ENCODE measurements at regions of chr2 and their contacts with region 1.

Region 1: DNA sequence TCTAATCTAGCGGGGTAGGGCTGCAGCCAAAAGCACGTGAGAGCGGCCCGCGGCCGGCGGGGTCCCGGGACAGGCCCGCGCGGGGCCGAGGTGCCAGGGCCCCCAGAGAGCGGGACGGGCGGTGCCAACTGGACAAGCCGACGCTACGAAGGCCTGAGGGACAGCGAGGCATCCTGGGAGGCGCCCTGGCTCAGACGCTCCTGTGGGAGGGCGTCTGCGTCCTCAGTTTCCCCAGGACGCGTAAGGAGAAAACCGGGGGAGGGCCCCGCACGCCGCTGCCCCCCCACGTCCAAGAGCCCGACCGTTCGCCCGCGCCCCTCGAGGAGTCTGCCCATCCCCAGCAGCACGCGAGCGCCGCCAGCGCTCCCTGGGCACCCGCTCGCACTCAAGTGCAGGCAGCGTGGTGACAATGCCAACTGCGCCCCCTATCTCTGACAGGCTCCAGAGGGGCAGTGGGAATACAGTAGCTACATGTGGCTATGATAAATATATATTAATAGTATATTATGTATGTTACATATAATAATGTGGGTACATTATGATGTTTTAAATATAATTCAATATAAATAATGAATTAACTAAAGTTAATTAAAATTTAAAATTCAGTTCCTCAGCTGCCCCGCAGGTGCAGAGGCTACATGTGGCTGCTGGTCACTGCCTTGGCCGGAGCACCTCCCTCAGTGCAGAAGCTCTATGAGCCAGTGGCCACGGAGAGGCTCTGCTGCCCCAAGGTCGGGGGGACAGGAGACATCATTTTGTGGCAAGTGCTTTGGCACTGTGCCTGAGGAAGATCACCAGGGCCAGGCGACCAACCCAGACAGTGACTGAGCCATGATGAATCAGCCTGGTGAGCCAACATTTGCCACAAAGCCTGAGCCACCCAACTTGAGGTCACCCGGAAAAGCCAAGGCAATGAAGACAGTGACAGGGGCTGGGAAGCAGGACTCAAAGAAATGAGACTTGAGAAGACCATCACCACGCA is 5.5 kb upstream of the SFT2D3 start:
- DNase-seq: peak; percentile 75 to 80
- ATAC-seq: peak; percentile 76 to 93 (median 90)
- H3K4me3 ChIP-seq: peak overlapping the region; percentile 23 to 56 (median 49)
- H3K27ac ChIP-seq: peak overlapping the region in 6 of 10 donors; percentile 24 to 55 (median 32)
- H3K4me1 ChIP-seq: peaks cover 2 to 23% (median 12%) of the 10 kb centered on the region in 9 donors
- H3K27me3 ChIP-seq: peaks cover 0 to 5% (median 0%) of the 10 kb centered on the region in 7 donors
- CTCF ChIP-seq: peak; percentile 43 to 88 (median 72)

Region 2: DNA sequence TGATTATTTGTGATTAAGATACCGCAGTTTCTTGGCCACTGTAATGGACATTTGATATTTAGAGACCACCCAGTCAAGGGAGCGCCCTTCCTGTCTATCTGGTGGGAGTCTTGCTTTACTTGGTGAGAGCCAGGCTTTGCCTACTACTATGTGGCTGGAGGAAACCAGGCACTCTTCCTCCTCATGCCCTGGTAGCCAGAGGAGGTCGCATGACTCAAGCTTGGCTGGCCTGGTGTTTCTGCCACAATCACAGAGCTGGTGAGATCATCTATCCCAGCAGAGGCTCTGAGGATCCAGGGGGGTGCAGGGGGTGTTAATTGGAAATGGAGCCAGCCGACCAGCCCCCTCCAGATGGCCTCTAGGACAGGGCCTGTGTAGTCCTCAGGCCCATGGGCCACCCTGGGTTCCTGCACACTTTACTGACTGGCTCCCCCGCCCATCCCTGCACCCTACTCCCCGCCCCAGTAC is 542.1 kb before region 1 on chr2:
- intact Hi-C with region 1: no loop called
- DNase-seq: no peak
- ATAC-seq: peak in 4 of 8 donors; percentile 15 to 71 (median 50)
- H3K4me3 ChIP-seq: no peak overlapping the region
- H3K27ac ChIP-seq: peak overlapping the region in 1 of 10 donors; percentile 57
- H3K4me1 ChIP-seq: peaks cover 0 to 20% (median 0%) of the 10 kb centered on the region in 9 donors
- H3K27me3 ChIP-seq: peaks cover 0 to 10% (median 0%) of the 10 kb centered on the region in 7 donors
- CTCF ChIP-seq: no peak

Region 3: GRCh38 chr2:127516031-127516762 is 179.6 kb before region 1 on chr2:
- intact Hi-C with region 1: loop called in 3 of 10 experiments (anchors 5 to 10 kb)
- DNase-seq: peak; percentile 82 to 87
- ATAC-seq: peak; percentile 79 to 90 (median 86)
- H3K4me3 ChIP-seq: no peak overlapping the region
- H3K27ac ChIP-seq: peak overlapping the region; percentile 48 to 82 (median 74)
- H3K4me1 ChIP-seq: peaks cover 11 to 67% (median 49%) of the 10 kb centered on the region in 9 donors
- H3K27me3 ChIP-seq: no peaks in the 10 kb centered on the region
- CTCF ChIP-seq: no peak

Region 4: DNA sequence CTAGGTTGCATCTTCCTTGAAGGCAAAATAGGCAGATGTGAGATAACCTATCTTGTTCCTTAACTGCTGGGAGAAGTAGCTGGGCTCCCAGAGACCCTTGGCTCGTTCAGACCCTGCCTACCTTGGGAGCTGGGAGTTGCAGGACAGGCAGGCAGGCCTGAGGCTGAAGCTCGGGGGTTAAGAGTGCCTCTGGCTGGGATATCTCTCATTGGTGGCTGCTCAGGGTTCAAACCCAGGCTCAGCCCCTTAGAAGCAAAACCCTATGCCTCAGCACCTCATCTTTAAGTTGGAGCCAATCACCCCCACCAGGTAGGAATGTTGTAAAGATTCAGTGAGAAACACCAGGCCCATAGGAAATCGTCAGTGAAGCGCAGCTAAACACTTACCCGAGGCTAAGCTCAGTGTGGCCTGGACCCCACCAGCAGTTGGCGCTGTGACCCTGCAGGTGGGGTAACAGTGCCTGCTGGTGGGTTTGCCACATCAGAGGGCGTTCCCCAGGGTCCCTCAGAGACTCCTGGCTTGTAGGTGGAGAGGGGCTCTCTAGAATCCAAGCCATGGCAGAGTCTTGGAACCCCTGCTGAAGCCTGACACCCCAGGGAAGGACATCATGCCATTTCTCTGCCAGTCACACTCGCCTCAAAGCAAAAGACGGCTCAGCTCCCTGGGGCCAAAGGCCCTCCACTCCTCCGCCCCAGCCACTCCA is 104.4 kb before region 1 on chr2:
- intact Hi-C with region 1: loop called in 7 of 10 experiments (anchors 2 to 10 kb)
- DNase-seq: peak; percentile 57 to 65
- ATAC-seq: peak; percentile 74 to 94 (median 87)
- H3K4me3 ChIP-seq: no peak overlapping the region
- H3K27ac ChIP-seq: no peak overlapping the region
- H3K4me1 ChIP-seq: peaks cover 0 to 4% (median 0%) of the 10 kb centered on the region in 9 donors
- H3K27me3 ChIP-seq: no peaks in the 10 kb centered on the region
- CTCF ChIP-seq: peak; percentile 91 to 97 (median 95)

Region 5: DNA sequence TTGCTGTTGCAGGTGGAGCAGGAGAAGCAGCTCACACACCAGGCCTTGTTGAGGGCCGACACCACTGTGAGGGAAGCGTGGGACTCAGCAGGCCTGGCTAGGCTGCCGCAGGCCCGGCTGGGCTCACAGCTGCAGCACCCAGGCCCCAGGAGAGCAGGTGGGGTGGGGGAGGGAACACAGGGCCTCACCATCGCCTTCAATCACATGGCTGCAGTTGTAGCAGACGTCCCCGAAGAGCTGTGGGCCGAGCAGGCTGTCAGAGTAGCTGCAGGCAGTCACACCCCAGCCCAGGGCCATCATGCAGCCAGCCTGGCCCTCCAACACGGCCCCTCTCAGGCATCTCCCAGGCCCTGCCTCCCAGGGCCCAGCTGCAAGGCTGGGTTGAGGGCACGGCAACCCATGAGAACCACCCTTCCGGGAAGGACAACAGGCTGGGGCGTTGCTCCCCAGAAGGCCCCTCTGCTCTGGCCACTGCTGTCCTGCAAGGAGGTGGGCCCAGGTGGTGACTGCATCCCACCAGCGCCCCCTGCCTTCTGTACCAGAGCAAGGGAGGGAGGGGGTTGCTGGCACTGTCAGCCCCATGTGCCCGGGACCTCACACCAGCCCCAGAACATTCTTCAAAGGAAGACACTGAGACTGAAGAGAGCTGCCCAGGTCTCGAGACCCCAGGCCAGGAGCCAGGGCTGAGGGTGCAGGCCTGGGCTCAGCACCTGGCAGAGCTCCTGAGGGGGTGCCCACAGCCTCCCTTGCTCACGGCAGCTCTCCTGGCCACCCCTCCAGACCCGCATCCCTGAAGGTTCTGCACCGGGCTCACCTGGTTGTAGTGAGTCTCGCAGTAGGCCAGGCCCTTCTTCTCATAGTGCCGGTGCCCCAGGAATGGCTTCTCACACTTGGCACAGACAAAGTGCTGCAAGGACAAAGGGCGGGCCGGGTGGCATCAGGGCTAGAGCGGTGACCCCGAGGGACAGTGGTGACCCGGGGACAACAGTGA is 55.4 kb before region 1 on chr2:
- intact Hi-C with region 1: loop called in 3 of 10 experiments (anchors 10 kb)
- DNase-seq: peak in 1 of 2 donors; percentile 13
- ATAC-seq: no peak
- H3K4me3 ChIP-seq: no peak overlapping the region
- H3K27ac ChIP-seq: peak overlapping the region in 9 of 10 donors; percentile 69 to 95 (median 89)
- H3K4me1 ChIP-seq: peaks cover 28 to 98% (median 61%) of the 10 kb centered on the region in 9 donors
- H3K27me3 ChIP-seq: no peaks in the 10 kb centered on the region
- CTCF ChIP-seq: peak in 7 of 9 donors; percentile 12 to 51 (median 28)

Region 6: DNA sequence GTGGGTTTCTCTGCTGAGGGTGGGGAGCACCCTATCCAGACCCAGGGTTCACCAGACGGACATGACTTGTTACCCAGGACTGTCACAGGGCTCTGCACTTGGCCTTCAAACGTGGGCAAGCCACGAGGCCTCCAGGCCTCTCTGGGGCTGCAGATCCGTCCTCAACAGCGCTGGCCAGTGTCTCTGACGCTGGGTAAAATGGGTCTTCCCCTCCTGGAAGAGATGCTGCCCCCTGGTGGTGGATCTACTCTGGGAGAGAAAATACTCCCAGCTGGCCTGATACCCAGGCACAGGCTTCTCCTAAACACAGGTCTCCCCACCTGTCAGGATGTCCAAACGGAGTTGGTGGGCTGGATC is 46.1 kb before region 1 on chr2:
- intact Hi-C with region 1: loop called in 2 of 10 experiments (anchors 10 kb)
- DNase-seq: peak; percentile 76 to 88
- ATAC-seq: peak; percentile 0 to 51 (median 31)
- H3K4me3 ChIP-seq: no peak overlapping the region
- H3K27ac ChIP-seq: peak overlapping the region; percentile 42 to 95 (median 83)
- H3K4me1 ChIP-seq: peaks cover 66 to 98% (median 86%) of the 10 kb centered on the region in 9 donors
- H3K27me3 ChIP-seq: no peaks in the 10 kb centered on the region
- CTCF ChIP-seq: peak; percentile 85 to 93 (median 89)

Region 7: GRCh38 chr2:127659408-127660290 is 36.1 kb before region 1 on chr2:
- intact Hi-C with region 1: loop called in 1 of 10 experiments (anchors 5 kb)
- DNase-seq: peak; percentile 68 to 70
- ATAC-seq: peak; percentile 30 to 67 (median 49)
- H3K4me3 ChIP-seq: peak overlapping the region in 2 of 10 donors; percentile 2 to 21
- H3K27ac ChIP-seq: peak overlapping the region; percentile 78 to 95 (median 86)
- H3K4me1 ChIP-seq: peaks cover 72 to 97% (median 92%) of the 10 kb centered on the region in 9 donors
- H3K27me3 ChIP-seq: peaks cover 0 to 19% (median 0%) of the 10 kb centered on the region in 7 donors
- CTCF ChIP-seq: no peak